Activated T-helper 1 cell treated with anti-CD3 and anti-CD28 coated beads, Interleukin-12 subunit alpha, Interleukin-12 subunit beta, Interleukin-2, Interleukin-4 antibody, amounts not matched to agents 30 ng/mL and 10 ng/mL and 1 ng/mL, durations not matched to agents 14 hours and 24 hours and 36 hours (primary cell): ENCODE measurements at regions of chr4 and their contacts with region 1.

Region 1: DNA sequence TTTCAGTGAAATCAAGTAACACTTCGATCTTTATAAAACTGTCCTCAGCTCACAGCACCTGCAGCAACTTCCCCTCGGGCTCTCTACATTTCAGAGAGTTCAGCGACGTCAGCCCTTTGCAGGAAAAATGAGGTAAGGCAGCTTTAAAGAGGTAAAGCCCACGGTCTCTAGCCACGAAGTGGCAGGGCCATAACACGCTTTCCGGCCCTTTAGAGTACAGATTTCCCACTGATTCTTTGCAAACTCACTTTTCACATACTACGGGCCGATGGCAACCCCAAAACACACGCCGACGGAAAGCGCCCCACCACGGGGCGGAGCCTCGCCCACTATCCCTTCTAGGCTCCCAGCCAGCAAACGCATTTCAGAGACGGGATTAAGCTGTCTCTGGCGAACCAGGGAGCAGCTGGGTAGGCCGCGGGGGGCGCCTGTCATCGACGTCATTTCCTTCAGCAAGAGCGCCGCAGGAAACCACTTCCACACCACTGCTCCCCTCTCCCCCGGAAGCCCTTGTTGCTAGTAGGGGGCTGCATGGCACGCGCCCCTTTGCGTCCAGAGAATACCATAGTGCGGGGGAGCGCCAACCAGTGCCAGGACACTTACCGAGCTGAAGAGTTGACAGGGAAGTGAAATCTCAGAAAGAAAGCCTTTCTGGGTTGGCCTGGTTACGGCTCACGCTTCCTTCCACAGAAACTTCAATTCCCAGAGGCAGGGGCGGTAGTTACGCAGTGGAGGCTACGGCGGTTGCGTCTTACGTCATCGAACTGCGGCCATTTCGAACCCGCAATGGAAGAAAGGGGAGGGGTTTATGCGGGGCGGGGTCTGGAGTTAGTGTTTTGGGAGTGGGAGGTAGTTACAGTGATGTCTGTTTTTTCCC is at the start of gene TRMT10A:
- DNase-seq: peak; percentile 92
- H3K4me3 Mint-ChIP-seq: peak within 1 kb of the TSS; percentile 89
- H3K27ac Mint-ChIP-seq: peak within 1 kb of the TSS; percentile 96
- H3K4me1 Mint-ChIP-seq: peaks cover 25% of the 10 kb centered on the region
- H3K27me3 Mint-ChIP-seq: peaks cover 11% of the 10 kb centered on the region
- total RNA-seq, gene TRMT10A: 7.3 TPM in 2 replicates

Region 2: DNA sequence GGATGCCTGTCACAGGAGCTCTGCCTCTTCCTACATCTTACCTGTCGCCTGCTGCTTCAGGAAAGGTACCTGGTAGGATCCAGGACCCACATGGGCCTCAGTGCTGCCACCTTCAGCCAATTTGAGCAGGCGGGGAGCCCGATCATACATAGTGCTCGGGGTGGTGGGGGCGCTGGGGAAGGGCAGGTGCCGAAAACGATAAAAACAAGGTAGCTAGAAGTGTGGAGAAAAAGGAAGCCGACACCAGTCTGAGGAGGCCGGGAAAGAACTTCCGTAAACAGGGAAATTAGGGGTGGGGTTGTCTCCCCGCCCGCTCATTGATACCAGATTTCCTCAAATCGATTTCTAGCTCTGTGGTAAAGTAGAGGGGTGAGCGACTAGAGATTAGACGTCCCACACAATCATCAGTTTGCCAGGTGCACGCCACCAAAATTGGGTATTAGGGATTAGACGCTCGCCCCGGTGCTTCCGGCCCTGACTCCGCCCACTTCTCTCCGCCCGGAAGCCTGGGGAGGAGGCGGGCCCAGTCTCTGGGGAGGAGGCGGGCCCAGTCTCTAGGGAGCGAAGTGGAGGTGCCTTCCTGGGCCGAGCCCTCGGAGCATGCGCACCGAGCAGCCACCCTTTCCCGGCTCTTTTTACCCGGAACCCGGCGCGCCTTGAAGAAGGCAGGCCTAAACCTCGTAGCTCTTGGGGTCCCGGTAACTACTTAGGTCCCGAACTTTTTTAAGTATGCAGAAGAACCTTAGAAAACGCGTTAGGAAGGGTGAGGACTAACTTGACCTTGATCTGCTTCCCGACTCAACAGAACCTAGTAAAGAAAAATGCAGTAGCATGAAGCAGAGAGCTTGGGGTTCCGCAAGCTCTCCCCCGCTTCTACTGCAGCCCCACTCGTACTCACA is 1420.3 kb before region 1 on chr4 and contains the start of gene STPG2:
- intact Hi-C with region 1: loop called (anchors 1 kb)
- DNase-seq: peak; percentile 91
- H3K4me3 Mint-ChIP-seq: peak within 1 kb of the TSS; percentile 88
- H3K27ac Mint-ChIP-seq: peak within 1 kb of the TSS; percentile 93
- H3K4me1 Mint-ChIP-seq: peaks cover 18% of the 10 kb centered on the region
- H3K27me3 Mint-ChIP-seq: peaks cover 7% of the 10 kb centered on the region
- total RNA-seq, gene STPG2: not detected in 2 replicates

Region 3: DNA sequence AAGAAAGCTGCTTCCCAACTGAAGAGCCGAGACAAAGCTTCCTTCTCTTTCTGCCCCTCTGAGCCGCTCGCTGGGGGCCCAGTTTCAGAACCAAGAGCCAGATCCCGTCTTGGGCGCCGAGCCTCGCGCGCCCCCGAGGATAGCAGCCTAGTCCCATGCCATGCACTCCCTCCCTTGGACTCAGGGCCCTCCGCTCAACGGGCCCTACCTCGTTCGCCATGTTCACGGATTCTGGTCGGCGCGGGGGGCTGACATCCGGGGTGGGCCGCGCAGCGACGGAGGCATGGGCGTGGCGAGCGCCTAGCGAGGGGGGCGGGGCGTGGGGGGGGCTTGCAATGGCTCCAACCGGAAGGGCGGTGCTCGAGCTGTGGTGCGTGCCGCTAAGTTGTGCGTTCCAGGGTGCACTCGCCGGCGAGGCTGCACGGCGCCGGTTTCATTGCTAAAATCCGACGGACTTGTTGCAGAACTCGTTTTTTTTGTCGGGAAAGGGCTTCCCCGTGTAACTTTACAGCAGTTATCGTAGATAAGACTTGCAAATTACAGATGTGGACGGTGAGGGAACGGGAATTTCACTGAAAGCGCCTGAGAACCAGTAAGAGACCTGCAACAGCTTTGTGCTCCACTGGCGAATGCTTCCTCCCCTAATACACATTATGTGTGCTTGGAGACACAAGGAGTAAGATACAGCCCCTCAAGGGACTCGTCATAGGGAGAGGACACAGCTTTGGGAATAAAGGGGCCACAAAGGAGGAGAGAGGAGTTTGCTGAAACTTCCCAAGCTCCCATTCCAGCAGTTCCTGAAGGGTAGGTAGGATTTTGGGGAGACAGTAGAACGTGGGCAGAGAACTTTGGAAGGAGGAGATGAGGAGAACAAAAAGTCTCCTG is 474.8 kb before region 1 on chr4 and contains the start of gene ADH5:
- intact Hi-C with region 1: loop called (anchors 2 kb)
- DNase-seq: peak; percentile 77
- H3K4me3 Mint-ChIP-seq: peak within 1 kb of the TSS; percentile 98
- H3K27ac Mint-ChIP-seq: peak within 1 kb of the TSS; percentile 98
- H3K4me1 Mint-ChIP-seq: peaks cover 50% of the 10 kb centered on the region
- H3K27me3 Mint-ChIP-seq: peaks cover 2% of the 10 kb centered on the region
- total RNA-seq, gene ADH5: 68.8 and 74.9 TPM in 2 replicates

Region 4: GRCh38 chr4:99808260-99808857 is 244.8 kb after region 1 on chr4:
- intact Hi-C with region 1: loop called (anchors 1 kb)
- DNase-seq: peak; percentile 63
- H3K4me3 Mint-ChIP-seq: no peak overlapping the region
- H3K27ac Mint-ChIP-seq: no peak overlapping the region
- H3K4me1 Mint-ChIP-seq: peaks cover 16% of the 10 kb centered on the region
- H3K27me3 Mint-ChIP-seq: peaks cover 11% of the 10 kb centered on the region

Region 5: DNA sequence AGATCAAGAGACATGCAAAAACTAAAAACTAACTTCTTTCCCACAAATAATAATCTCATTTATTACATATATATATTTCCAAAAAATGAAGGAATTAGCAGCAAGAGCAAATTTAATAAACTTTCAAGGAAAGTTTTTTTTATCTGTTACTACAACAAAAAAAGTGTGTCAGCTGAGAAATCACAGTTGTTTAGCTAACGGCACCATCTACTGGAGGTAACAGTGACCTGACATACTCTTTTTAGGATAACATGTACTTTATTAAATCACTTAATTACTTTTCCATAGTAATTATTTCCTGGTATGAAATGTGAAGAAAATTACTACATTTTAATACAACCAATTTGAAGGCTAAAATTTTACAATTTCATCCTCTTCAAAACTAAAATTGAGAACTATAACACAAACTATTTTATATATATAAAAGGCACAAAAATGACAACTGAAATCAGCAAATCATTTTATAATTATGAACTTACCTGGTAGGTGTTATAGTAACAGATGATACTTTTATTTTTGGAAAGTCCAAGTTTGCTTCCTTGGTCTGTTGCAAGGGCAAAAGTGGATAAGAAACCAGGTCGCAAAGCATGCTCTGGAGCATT is 321.6 kb after region 1 on chr4:
- intact Hi-C with region 1: loop called (anchors 1 kb)
- DNase-seq: no peak
- H3K4me3 Mint-ChIP-seq: no peak overlapping the region
- H3K27ac Mint-ChIP-seq: no peak overlapping the region
- H3K4me1 Mint-ChIP-seq: peaks cover 4% of the 10 kb centered on the region
- H3K27me3 Mint-ChIP-seq: no peaks in the 10 kb centered on the region